ENCODE measurements at regions of chr12 and their contacts with region 1.

Region 1: DNA sequence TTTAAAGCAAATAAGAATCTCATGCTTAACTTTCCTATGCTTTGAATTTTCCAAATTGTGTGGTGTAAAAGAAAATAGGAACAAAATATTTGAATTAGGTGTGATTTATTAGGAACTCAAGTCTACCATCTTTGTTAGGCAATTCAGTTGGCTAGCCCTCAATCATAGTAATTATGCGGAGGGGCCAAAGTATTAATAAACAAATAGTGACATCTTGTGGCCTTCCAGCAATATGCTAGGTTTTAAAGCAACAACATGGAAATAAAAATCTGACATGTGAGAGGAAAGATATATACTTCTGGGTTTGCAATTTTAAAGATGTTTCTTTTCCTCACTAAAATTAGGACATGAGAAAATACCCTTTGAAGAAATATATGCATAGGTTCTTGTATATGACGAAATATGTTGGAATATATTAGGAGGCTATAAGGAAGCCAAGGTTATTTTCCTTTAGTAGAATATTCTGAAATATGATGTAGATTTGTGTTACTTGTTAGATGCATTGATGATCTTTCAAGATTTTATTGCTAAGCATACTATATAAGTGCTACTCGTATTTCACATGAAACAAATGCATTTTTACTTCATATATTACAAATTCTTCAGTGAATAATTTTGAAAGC is 200.4 kb downstream of the PTPRO start:
- DNase-seq: peak; percentile 79
- H3K4me3 ChIP-seq: no peak overlapping the region
- H3K27ac ChIP-seq: no peak overlapping the region
- H3K4me1 ChIP-seq: no peaks in the 10 kb centered on the region
- H3K27me3 ChIP-seq: peaks cover 30% of the 10 kb centered on the region

Region 2: DNA sequence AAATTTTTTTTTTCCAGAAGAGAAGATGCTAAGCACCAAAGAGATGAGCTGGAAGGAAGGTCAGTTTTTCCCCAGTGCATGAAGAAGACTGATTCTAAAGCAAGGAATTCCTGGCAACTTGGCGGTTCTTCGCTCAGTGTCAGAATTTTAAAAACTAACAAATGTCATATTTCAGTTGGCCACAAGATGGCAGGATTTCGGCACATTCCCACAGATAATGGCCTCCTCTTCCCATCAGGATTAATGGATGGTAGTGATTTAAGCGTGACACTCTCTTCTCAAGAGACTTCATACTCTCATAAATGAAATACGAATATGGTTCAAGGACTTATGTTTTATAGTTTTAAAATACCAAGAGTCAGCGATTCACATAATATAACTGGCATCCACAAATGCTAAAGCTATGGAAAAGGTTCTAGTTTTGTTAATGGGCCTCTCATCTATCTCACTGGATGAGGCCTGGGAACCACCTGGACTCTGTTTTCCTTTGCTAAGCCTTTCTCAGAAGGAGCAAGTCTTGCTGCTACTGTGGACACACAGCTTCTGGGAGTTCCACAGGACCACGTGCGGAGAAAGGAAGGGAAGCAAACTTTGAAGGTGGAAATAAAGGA is 246.5 kb before region 1 on chr12:
- in situ Hi-C with region 1: loop called (anchors 10 kb)
- DNase-seq: peak; percentile 57
- H3K4me3 ChIP-seq: no peak overlapping the region
- H3K27ac ChIP-seq: no peak overlapping the region
- H3K4me1 ChIP-seq: peaks cover 19% of the 10 kb centered on the region
- H3K27me3 ChIP-seq: no peaks in the 10 kb centered on the region

Region 3: GRCh38 chr12:15830538-15830937 is 307.9 kb after region 1 on chr12:
- in situ Hi-C with region 1: no loop called
- DNase-seq: peak; percentile 64
- H3K4me3 ChIP-seq: peak overlapping the region; percentile 62
- H3K27ac ChIP-seq: peak overlapping the region; percentile 90
- H3K4me1 ChIP-seq: peaks cover 35% of the 10 kb centered on the region
- H3K27me3 ChIP-seq: no peaks in the 10 kb centered on the region